ENCODE measurements at regions of chr12 and their contacts with region 1.

Region 1: DNA sequence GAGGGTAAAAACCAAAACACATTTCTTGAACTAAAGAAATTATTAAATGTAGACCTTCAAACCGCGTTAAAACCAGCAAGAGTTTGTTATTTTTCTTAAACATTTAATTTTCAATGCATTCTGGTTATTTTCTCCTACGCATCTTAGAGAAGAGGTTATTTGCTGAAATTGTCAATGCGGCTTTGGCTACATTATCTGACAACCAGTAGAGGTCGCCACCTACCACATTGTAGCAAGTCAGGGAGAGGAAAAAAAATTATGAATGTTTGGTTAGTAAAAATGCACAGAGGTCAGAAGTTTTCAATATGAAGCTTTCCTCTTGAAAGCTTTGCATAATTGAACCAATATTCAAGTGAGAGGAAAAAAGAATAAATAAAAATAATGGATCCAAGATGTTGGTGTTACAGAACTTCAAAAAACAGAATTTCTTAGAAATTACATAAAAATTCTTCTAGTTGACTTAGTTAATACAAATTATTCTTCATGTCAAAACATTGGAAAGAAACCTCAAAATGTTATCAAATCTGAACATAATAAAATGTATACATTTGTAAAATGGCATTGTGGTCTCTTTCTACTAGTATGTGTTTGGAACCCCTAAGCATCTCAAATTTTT is 159.4 kb upstream of the TMTC2 start:
- DNase-seq: peak; percentile 62
- H3K4me3 Mint-ChIP-seq: no peak overlapping the region
- H3K27ac Mint-ChIP-seq: no peak overlapping the region
- H3K4me1 Mint-ChIP-seq: peaks cover 18% of the 10 kb centered on the region
- H3K27me3 Mint-ChIP-seq: no peaks in the 10 kb centered on the region
- CTCF ChIP-seq: peak; percentile 36

Region 2: DNA sequence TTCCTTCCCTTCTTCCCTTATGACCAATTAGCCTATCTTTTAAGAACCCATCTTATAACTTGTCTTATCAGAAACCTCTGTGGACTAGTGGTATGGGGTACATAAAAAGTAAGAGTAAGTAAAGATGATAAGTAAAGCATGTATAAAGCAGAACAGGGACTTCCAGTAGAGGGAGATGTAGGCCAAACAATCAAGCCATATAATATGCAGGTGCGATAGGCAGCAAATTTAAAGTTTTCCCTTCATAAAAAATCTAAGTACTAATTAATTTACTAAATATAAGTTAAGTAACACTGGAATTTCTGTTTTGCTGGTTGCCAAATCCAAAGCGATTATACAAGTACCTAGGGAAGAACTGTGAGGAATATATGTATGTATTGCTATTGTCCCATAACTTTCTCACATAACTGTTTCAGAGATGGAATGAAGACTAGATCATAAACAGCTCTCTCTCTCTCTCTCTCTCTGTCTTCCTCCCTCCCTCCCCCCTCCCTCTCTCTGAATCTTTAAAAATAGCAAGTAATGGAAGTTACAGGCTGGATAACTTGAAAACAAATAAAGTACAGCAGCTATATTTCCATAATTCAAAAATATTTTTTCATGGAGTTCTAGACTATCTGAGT is 143.2 kb before region 1 on chr12:
- CTCF ChIA-PET with region 1: interaction called, 4 read pairs
- intact Hi-C with region 1: loop called (anchors 1 kb)
- DNase-seq: peak; percentile 20
- H3K4me3 Mint-ChIP-seq: no peak overlapping the region
- H3K27ac Mint-ChIP-seq: no peak overlapping the region
- H3K4me1 Mint-ChIP-seq: no peaks in the 10 kb centered on the region
- H3K27me3 Mint-ChIP-seq: no peaks in the 10 kb centered on the region
- CTCF ChIP-seq: no peak

Region 3: DNA sequence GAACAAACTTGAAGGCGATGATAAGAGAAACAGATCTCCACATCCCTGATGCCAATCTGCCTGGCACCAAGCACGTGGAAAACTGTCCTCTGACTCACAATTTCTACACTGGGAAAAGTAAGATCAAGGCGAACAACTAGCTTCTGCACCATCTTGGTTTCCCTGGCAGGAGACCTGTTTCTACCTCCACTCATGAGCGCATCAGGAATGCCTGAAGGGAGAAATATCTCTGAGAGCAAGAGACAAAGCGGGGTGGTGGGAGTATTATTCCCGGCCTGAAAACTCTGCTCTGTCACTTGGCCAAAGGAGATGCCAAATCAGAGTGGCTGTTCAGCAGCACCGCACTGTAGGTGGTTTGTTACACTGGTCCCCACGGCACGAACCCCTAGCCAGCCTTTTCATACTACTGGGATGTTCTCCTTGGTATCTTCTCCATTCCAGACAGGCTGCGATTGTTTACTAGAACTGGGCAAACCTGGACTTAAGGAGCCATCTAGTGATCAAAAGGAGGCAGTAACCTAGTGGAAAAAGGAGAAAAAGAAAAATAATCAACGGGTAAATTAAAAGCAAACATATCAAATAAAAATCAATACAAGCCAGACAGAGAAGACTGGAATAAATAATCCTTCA is 100.4 kb after region 1 on chr12:
- CTCF ChIA-PET with region 1: interaction called, 4 read pairs
- intact Hi-C with region 1: loop called (anchors 1 kb)
- DNase-seq: peak; percentile 6
- H3K4me3 Mint-ChIP-seq: no peak overlapping the region
- H3K27ac Mint-ChIP-seq: no peak overlapping the region
- H3K4me1 Mint-ChIP-seq: peaks cover 5% of the 10 kb centered on the region
- H3K27me3 Mint-ChIP-seq: no peaks in the 10 kb centered on the region
- CTCF ChIP-seq: peak; percentile 64

Region 4: GRCh38 chr12:82996160-82996812 is 469.0 kb after region 1 on chr12:
- CTCF ChIA-PET with region 1: no interaction called
- intact Hi-C with region 1: loop called (anchors 10 kb)
- DNase-seq: peak; percentile 9
- H3K4me3 Mint-ChIP-seq: no peak overlapping the region
- H3K27ac Mint-ChIP-seq: no peak overlapping the region
- H3K4me1 Mint-ChIP-seq: peaks cover 9% of the 10 kb centered on the region
- H3K27me3 Mint-ChIP-seq: no peaks in the 10 kb centered on the region
- CTCF ChIP-seq: no peak

Region 5: GRCh38 chr12:83140135-83140534 is 612.9 kb after region 1 on chr12:
- CTCF ChIA-PET with region 1: no interaction called
- intact Hi-C with region 1: no loop called
- DNase-seq: no peak
- H3K4me3 Mint-ChIP-seq: no peak overlapping the region
- H3K27ac Mint-ChIP-seq: no peak overlapping the region
- H3K4me1 Mint-ChIP-seq: no peaks in the 10 kb centered on the region
- H3K27me3 Mint-ChIP-seq: no peaks in the 10 kb centered on the region
- CTCF ChIP-seq: no peak

Region 6: DNA sequence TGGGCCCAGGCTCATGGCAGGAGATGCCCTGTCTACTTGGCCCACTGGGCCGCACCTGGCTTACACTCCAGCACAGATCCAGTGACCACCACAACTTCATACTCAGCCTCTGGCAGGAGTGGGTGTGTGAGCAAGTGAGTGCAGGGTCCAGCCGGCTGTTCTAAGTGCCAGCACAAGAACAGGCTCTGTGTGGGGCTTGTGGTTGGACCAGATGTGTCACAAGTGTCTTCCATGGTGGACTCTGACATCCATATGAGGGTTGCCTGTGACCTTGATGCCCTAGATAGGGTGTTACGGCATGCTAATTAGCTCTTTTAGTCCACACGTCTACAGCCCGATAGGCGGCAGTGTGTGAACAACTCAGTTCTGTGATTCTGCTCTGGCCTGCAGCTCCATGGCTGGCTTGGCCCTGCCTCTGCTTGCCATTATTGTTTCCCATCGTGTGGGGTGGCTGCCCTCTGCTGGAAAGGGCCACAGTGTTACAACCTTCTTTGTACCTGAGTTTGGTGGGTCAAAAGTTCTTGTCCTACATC is 1296.2 kb after region 1 on chr12:
- CTCF ChIA-PET with region 1: no interaction called
- intact Hi-C with region 1: loop called (anchors 10 kb)
- DNase-seq: peak; percentile 66
- H3K4me3 Mint-ChIP-seq: no peak overlapping the region
- H3K27ac Mint-ChIP-seq: no peak overlapping the region
- H3K4me1 Mint-ChIP-seq: peaks cover 28% of the 10 kb centered on the region
- H3K27me3 Mint-ChIP-seq: no peaks in the 10 kb centered on the region
- CTCF ChIP-seq: no peak

Region 7: GRCh38 chr12:84502907-84503787 is 1975.9 kb after region 1 on chr12:
- CTCF ChIA-PET with region 1: no interaction called
- intact Hi-C with region 1: loop called (anchors 10 kb)
- DNase-seq: peak; percentile 63
- H3K4me3 Mint-ChIP-seq: no peak overlapping the region
- H3K27ac Mint-ChIP-seq: no peak overlapping the region
- H3K4me1 Mint-ChIP-seq: peaks cover 21% of the 10 kb centered on the region
- H3K27me3 Mint-ChIP-seq: no peaks in the 10 kb centered on the region
- CTCF ChIP-seq: peak; percentile 62